ENCODE measurements at regions of chr17 and their contacts with region 1.

Region 1: GRCh38 chr17:73255671-73256181 is 6.0 kb downstream of the CPSF4L start:
- DNase-seq: peak; percentile 43
- ATAC-seq: peak; percentile 70 to 72

Region 2: DNA sequence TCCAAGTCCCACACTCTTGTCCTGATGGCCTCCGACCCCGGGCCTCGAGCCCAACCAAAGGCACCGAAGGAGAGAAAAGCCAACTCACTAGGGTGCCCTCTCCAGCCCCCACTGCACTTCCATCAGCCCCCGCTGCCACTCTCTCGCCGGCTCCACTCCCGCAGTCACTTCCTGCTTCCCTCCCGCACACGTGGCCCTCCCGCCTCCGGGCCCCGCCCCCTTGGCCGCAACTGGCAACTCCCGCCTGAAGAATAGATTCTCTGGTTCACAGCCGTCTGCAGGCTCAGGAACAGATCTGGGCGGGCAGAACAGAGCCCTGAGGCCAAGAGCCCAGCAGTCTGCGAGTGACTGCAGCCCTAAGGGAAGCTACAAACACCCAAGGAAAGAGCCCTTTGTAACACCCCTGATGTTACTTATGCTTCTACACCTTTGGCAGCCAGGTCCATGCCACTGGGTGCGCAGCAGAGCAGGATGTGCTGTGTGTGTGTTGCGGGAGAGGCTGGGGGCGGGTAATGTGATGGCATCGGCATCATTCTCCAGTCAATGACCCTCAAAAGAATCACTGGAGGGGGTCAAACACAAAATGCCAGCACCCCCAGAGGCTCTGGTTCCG is 163.1 kb before region 1 on chr17 and contains the start of gene SLC39A11:
- intact Hi-C with region 1: no loop called
- DNase-seq: peak; percentile 93
- ATAC-seq: peak; percentile 98 to 99
- total RNA-seq, gene SLC39A11: 11.3 to 11.7 TPM

Region 3: DNA sequence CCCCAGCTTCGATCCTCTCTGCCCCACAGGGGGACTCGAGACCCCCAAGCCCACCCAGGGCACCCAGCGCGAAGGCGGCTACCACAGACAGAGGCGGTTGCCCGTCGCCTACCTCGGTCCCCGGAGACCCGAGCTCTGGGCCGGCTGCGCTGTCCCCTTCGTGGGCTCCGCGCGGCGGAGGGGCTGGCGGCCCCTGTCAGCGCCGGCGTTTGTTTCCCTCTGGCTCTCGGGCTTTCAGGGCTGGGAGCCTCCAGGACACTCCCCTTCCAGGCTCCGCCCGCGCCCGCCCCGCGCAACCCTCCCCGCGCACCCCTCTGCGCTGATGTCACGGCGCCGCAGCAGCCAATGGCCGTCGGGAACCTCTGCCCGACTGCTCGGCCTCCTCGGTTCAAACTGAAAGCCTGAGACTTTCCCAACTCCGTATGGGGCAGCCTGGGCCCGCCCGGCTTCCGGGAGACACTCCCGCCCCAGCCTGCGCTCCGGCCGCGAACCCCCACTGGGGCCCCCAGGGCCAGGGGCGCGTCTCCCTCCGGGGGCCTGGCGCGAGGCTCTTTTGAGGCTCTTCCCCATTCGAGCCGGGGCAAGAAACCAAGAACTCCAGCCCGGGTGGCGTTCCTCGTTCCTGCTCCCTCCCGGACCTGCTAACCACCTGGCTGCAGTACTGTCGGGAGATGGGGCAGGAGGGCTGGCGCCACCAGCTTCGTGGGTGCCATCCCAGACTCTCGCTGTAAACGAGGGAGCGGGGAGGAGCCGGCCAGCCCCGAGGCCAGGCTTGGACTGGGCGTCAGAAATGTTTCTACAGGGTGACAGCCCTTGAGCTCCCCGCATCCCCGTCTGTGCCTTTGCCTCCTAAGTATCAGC is 56.3 kb after region 1 on chr17 and contains the start of gene CDC42EP4:
- intact Hi-C with region 1: loop called in 1 of 2 experiments (anchors 10 kb)
- DNase-seq: peak; percentile 96
- ATAC-seq: peak; percentile 92 to 93
- total RNA-seq, gene CDC42EP4: 44.9 to 80.5 TPM

Region 4: GRCh38 chr17:73365906-73366623 is 110.3 kb after region 1 on chr17:
- intact Hi-C with region 1: loop called (anchors 1 to 2 kb)
- DNase-seq: peak; percentile 62
- ATAC-seq: peak; percentile 35 to 46

Region 5: DNA sequence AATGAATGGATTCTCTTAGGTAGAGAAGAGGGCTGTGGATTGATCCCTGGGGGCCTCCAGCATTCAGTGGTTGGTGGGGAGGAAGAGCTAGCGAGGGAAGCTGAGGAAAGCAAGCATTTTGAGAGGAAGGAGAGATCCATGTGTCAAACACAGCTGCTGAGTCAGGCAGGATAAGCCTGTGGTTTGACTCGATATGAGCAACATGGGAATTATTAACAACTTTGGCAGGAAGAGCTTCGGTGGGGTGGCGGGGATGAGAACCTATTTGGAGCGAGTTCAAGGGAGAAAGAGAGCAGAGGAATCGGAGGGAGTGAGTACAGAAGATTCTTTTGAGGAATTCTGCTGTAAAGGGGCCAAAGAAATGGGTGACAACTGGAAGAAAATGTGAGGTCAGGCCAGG is 115.6 kb after region 1 on chr17:
- intact Hi-C with region 1: loop called (anchors 1 to 2 kb)
- DNase-seq: no peak
- ATAC-seq: no peak

Region 6: DNA sequence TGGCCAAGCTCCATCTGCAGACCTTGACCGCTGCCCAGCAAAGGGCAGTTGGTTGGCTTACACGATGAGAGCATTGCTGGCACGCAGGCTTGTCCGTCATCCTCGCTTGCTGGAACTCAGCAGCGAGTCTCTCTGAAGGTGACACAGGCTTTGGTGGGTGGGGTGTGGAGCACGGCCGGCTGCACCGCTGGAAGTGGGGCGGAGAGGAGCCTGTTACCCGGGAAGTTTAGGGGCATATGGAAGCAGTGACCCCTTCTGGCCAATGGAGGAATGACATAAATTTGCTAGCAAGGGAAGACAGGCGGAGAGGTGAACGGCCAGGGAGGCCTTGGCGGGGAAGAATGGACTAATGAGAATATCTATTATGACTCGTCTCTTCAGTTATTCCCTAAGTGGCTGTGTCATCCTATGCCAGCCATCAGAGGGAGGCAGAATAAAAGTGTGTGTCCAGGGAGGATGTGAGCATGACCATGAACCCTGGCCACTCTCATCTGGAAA is 454.4 kb after region 1 on chr17:
- intact Hi-C with region 1: loop called in 1 of 2 experiments (anchors 10 kb)
- DNase-seq: peak; percentile 67
- ATAC-seq: peak; percentile 93 to 96